Activated CD4-positive, alpha-beta memory T cell treated with anti-CD3 and anti-CD28 coated beads for 36 hours (primary cell): ENCODE measurements at regions of chr3 and their contacts with region 1.

Region 1: GRCh38 chr3:52339612-52340011 is 23.5 kb downstream of the DNAH1 start:
- DNase-seq: peak; percentile 44
- H3K4me3 Mint-ChIP-seq: no peak overlapping the region
- H3K27ac Mint-ChIP-seq: no peak overlapping the region
- H3K4me1 Mint-ChIP-seq: peaks cover 6% of the 10 kb centered on the region
- H3K27me3 Mint-ChIP-seq: no peaks in the 10 kb centered on the region

Region 2: GRCh38 chr3:52210550-52211046 is 129.0 kb before region 1 on chr3:
- CTCF ChIA-PET with region 1: interaction called, 271 read pairs
- POLR2A ChIA-PET with region 1: no interaction called
- intact Hi-C with region 1: no loop called
- DNase-seq: no peak
- H3K4me3 Mint-ChIP-seq: no peak overlapping the region
- H3K27ac Mint-ChIP-seq: no peak overlapping the region
- H3K4me1 Mint-ChIP-seq: peaks cover 11% of the 10 kb centered on the region
- H3K27me3 Mint-ChIP-seq: no peaks in the 10 kb centered on the region

Region 3: DNA sequence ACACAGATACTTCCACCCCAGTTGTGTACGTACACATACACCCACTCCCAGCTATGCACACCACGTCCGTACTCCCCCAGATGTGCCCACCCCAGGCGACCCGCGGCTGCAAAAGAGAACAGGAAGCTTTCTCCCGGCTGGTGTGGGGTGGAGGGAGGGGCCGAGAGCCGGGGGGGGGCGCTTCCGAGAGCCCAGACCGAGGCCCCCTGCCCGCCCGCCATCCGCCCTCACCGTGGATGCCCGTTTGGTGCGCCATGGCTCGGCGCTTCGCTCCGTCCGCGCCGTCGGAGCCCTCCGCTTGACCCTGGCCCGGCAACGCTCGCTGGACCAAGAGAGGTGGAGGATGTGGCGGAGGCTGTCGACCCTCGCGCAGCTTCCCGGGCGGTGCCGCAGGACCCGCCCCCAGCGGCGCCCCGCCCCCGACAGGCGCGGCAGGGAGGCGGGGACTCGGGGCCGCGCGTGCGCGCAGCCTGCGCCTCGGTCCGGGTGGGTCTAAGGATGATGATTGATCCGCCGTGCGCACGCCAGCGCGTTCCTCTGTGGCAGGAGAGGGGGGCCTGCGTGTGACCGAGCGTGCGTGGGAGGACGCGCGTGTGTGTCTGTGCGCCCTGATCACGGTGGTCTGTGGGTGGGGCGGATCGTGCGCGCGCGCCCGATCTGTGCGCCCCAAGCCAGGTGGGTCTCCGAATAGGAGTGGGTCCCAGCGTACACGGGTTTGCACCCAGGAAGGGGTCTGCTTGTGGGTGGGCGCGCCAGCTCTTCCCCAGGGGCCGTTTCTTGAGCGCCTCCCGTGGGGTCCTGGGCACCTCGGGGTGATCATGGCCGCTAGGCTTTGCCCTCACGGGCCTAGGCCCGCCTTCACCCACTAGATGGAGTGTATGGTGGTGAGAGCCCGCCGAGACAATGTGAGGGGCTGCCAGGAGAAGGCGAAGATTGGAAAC is 100.6 kb before region 1 on chr3 and contains the start of gene TWF2:
- CTCF ChIA-PET with region 1: interaction called, 61 read pairs
- POLR2A ChIA-PET with region 1: no interaction called
- intact Hi-C with region 1: no loop called
- DNase-seq: peak; percentile 90
- H3K4me3 Mint-ChIP-seq: peak within 1 kb of the TSS; percentile 99
- H3K27ac Mint-ChIP-seq: peak within 1 kb of the TSS; percentile 97
- H3K4me1 Mint-ChIP-seq: peaks cover 70% of the 10 kb centered on the region
- H3K27me3 Mint-ChIP-seq: no peaks in the 10 kb centered on the region
- total RNA-seq, gene TWF2: 114 to 118 TPM

Region 4: GRCh38 chr3:52291508-52292181 is 48.0 kb before region 1 on chr3:
- CTCF ChIA-PET with region 1: interaction called, 86 read pairs
- POLR2A ChIA-PET with region 1: interaction called, 3 read pairs
- intact Hi-C with region 1: loop called (anchors 1 kb)
- DNase-seq: peak; percentile 57
- H3K4me3 Mint-ChIP-seq: no peak overlapping the region
- H3K27ac Mint-ChIP-seq: no peak overlapping the region
- H3K4me1 Mint-ChIP-seq: peaks cover 17% of the 10 kb centered on the region
- H3K27me3 Mint-ChIP-seq: no peaks in the 10 kb centered on the region

Region 5: DNA sequence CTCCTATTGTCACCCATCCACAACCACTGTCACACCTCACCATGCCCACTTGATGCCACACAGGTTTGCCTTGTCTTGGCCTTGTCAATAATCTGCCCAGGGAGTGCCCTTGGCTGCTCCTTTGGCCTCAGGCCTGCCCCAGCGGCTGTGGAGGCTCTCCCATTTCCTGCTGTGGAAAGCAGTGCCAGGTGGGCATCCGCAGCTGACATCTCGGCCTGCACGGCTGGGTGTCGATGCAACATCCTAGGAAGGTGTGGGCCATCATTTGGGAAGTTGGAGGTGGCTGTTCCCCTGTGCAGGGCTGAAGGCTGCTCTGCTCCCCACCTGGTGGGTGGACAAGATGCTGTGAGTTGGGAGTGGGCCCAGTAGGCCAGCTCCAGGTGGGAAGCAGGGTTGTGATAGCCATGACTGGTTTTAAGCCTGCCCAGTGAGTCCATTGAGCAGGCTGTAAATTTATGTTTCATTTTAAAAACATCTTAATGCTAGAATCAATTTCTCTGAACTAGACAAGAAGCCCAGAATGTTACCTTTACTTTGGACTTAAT is 11.0 kb before region 1 on chr3:
- CTCF ChIA-PET with region 1: interaction called, 21 read pairs
- POLR2A ChIA-PET with region 1: no interaction called
- intact Hi-C with region 1: no loop called
- DNase-seq: no peak
- H3K4me3 Mint-ChIP-seq: no peak overlapping the region
- H3K27ac Mint-ChIP-seq: no peak overlapping the region
- H3K4me1 Mint-ChIP-seq: no peaks in the 10 kb centered on the region
- H3K27me3 Mint-ChIP-seq: no peaks in the 10 kb centered on the region